Common myeloid progenitor, CD34-positive (primary cell): ENCODE measurements at regions of chr7 and their contacts with region 1.

Region 1: GRCh38 chr7:129635300-129636029 is 23.9 kb downstream of the NRF1 start:
- DNase-seq: peak; percentile 80 to 85 (median 81)
- H3K4me3 ChIP-seq: no peak overlapping the region
- H3K27ac ChIP-seq: no peak overlapping the region
- H3K4me1 ChIP-seq: peaks cover 0 to 5% (median 1%) of the 10 kb centered on the region in 4 experiments
- H3K27me3 ChIP-seq: no peaks in the 10 kb centered on the region

Region 2: GRCh38 chr7:129617652-129618051 is 17.8 kb before region 1 on chr7:
- CTCF ChIA-PET with region 1: interaction called, 40 read pairs
- POLR2A ChIA-PET with region 1: interaction called, 3 read pairs
- DNase-seq: peak in 1 of 3 donors; percentile 26
- H3K4me3 ChIP-seq: peak overlapping the region in 2 of 7 experiments; percentile 49 to 52
- H3K27ac ChIP-seq: peak overlapping the region in 1 of 2 experiments; percentile 12
- H3K4me1 ChIP-seq: peaks cover 34 to 54% (median 39%) of the 10 kb centered on the region in 4 experiments
- H3K27me3 ChIP-seq: no peaks in the 10 kb centered on the region

Region 3: GRCh38 chr7:129670656-129671055 is 35.2 kb after region 1 on chr7:
- CTCF ChIA-PET with region 1: no interaction called
- POLR2A ChIA-PET with region 1: no interaction called
- DNase-seq: no peak
- H3K4me3 ChIP-seq: no peak overlapping the region
- H3K27ac ChIP-seq: no peak overlapping the region
- H3K4me1 ChIP-seq: no peaks in the 10 kb centered on the region
- H3K27me3 ChIP-seq: no peaks in the 10 kb centered on the region